ENCODE measurements at regions of chr1 and their contacts with region 1.

Region 1: DNA sequence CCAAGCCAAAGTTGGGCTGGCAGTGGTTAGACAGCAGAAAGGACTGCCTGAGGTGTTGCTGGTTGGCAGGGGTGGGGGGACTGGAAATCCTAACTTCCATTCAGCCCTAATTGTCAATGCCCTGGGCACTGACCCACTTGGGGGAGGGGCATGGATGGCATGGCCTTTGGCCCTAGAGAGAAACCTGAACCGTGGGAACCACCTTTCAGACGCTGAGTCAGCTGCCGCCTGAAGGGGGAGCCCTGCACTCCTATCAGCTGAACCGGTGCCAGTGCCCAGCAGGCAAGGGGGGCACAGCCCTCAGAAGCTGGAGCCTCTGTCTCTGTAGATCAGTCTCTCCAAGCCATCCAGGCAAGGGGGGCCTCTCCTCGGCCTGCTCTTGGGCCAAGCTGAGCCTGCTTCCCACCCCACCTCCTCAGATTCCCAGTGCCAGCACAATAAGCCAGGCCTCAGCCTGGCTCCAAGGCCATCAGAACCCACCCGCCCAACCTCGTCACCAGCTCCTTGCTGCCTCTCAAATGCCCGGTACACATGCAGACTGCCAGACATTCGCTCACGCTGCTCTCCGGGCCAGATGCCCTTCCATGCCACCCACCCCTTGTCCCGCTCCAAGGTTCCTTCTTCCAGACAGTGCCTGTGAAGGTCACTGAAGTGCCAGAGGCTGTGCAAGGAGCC is 11.5 kb downstream of the TINAGL1 start:
- DNase-seq: peak; percentile 78 to 83 (median 80)
- ATAC-seq: peak; percentile 32 to 68 (median 40)
- H3K4me3 ChIP-seq: peak overlapping the region in 2 of 12 donors; percentile 40 to 52
- H3K27ac ChIP-seq: peak overlapping the region; percentile 75 to 98 (median 92)
- H3K4me1 ChIP-seq: peaks cover 25 to 72% (median 66%) of the 10 kb centered on the region in 12 donors
- H3K27me3 ChIP-seq: peaks cover 0 to 11% (median 0%) of the 10 kb centered on the region in 9 donors
- CTCF ChIP-seq: peak; percentile 46 to 79 (median 56)
- POLR2A ChIP-seq: peak in 1 of 2 donors; percentile 50

Region 2: DNA sequence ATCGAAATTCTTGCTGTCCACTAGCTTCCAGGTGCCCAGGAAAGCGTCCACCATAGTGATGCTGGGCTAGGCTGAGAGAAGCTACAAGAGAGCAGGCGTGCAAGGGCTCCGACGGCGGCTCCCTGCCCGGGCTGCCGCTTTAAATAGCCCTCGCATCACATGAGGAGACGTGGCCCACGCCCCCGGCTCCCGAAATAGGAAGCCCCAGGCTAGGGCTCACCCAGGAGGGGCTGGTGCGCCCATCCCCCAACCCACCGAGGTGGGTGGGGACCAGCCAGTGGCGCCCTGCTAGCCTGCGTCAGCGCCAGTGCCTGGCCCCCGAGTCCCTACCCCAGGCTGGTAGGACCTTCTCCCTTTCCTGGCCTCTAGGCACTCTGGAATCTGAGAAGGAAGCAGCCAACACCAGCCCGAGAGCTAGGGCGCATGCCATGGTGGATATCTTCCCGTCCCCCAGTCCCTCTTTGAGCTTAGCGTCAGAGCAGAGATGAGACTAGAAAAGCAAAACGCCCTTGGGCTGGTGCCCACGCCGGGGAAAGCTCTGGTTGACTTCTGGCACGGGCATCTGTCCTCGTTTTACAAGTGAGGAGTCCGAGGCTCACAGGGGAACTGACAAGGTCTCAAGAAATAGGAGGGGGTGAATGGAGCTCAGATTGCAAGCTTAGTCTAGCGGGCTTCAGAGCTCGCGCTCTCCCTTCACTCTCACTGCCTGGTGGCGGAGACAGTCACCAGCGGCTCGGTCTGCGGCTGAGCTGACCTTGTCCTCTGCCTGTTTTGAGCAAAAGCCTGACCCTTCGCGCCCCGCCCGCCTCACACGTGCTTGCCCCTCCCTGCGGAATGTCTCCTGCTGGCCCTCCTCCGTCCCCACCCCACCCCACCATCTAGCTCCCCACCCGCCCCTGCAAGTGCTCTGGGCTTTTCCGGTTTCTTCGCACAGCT is 214.6 kb before region 1 on chr1 and contains the start of gene FABP3:
- intact Hi-C with region 1: no loop called
- DNase-seq: peak; percentile 86 to 94 (median 88)
- ATAC-seq: peak; percentile 76 to 80 (median 78)
- H3K4me3 ChIP-seq: peak within 1 kb of the TSS; percentile 39 to 85 (median 64)
- H3K27ac ChIP-seq: peak within 1 kb of the TSS; percentile 87 to 99 (median 95)
- H3K4me1 ChIP-seq: peaks cover 0 to 36% (median 18%) of the 10 kb centered on the region in 12 donors
- H3K27me3 ChIP-seq: no peaks in the 10 kb centered on the region
- CTCF ChIP-seq: no peak
- POLR2A ChIP-seq: peak; percentile 44 to 96
- total RNA-seq, gene FABP3: 2,591 to 6,997 (median 5,230) TPM

Region 3: GRCh38 chr1:31575369-31576140 is 12.3 kb before region 1 on chr1:
- intact Hi-C with region 1: loop called in 1 of 10 experiments (anchors 2 kb)
- DNase-seq: no peak
- ATAC-seq: no peak
- H3K4me3 ChIP-seq: peak overlapping the region in 11 of 12 donors; percentile 64 to 92 (median 84)
- H3K27ac ChIP-seq: peak overlapping the region; percentile 33 to 99 (median 94)
- H3K4me1 ChIP-seq: peaks cover 18 to 62% (median 47%) of the 10 kb centered on the region in 12 donors
- H3K27me3 ChIP-seq: no peaks in the 10 kb centered on the region
- CTCF ChIP-seq: no peak
- POLR2A ChIP-seq: no peak